ENCODE measurements at regions of chr2 and their contacts with region 1.

Region 1: GRCh38 chr2:112121682-112122254 is 16.4 kb upstream of the FBLN7 start:
- DNase-seq: peak in 7 of 9 experiments; percentile 21 to 70 (median 53)
- ATAC-seq: peak; percentile 42
- H3K4me3 ChIP-seq: no peak overlapping the region
- H3K4me3 Mint-ChIP-seq: no peak overlapping the region
- H3K27ac ChIP-seq: no peak overlapping the region
- H3K27ac Mint-ChIP-seq: no peak overlapping the region
- H3K4me1 ChIP-seq: no peaks in the 10 kb centered on the region
- H3K4me1 Mint-ChIP-seq: no peaks in the 10 kb centered on the region
- H3K27me3 ChIP-seq: no peaks in the 10 kb centered on the region
- H3K27me3 Mint-ChIP-seq: no peaks in the 10 kb centered on the region
- CTCF ChIP-seq: peak; percentile 85

Region 2: GRCh38 chr2:111975053-111975552 is 146.7 kb before region 1 on chr2:
- CTCF ChIA-PET with region 1: no interaction called
- POLR2A ChIA-PET with region 1: no interaction called
- intact Hi-C with region 1: no loop called
- DNase-seq: no peak
- ATAC-seq: no peak
- H3K4me3 ChIP-seq: no peak overlapping the region
- H3K4me3 Mint-ChIP-seq: no peak overlapping the region
- H3K27ac ChIP-seq: no peak overlapping the region
- H3K27ac Mint-ChIP-seq: no peak overlapping the region
- H3K4me1 ChIP-seq: no peaks in the 10 kb centered on the region
- H3K4me1 Mint-ChIP-seq: no peaks in the 10 kb centered on the region
- H3K27me3 ChIP-seq: no peaks in the 10 kb centered on the region
- H3K27me3 Mint-ChIP-seq: peaks cover 13% of the 10 kb centered on the region
- CTCF ChIP-seq: no peak

Region 3: DNA sequence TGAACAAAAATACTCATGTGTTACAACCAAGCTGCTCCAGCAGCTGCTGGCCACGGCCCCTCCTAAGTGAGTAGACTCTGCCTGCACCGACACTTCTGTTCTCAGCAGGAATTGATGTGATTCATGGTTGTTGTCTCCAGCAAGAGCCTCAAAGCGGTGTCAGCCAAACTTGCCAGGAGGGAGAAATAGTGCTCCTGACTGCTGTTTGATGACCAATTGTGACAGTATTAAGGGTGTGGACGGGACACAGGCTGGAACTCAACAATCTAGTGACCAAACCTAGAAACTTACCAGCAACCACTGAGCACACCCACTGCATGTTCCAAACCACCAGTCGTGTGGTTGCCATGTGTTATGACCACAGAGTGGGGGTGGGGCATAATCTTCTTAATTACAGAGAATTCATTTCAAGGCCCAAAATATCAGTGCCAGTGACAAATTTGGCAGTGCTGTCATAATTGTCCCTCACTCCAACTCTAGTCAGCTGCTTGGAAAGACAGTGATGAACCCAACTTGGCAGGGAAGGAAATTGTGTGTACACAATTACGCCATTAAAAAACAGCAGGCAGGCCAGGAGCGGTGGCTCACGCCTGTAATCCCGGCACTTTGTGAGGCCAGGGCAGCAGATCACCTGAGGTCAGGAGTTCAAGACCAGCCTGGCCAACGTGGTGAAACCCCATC is 46.8 kb after region 1 on chr2:
- CTCF ChIA-PET with region 1: no interaction called
- POLR2A ChIA-PET with region 1: no interaction called
- intact Hi-C with region 1: loop called in 1 of 2 experiments (anchors 5 kb)
- DNase-seq: no peak
- ATAC-seq: no peak
- H3K4me3 ChIP-seq: no peak overlapping the region
- H3K4me3 Mint-ChIP-seq: no peak overlapping the region
- H3K27ac ChIP-seq: no peak overlapping the region
- H3K27ac Mint-ChIP-seq: no peak overlapping the region
- H3K4me1 ChIP-seq: no peaks in the 10 kb centered on the region
- H3K4me1 Mint-ChIP-seq: peaks cover 10% of the 10 kb centered on the region
- H3K27me3 ChIP-seq: no peaks in the 10 kb centered on the region
- H3K27me3 Mint-ChIP-seq: no peaks in the 10 kb centered on the region
- CTCF ChIP-seq: no peak

Region 4: DNA sequence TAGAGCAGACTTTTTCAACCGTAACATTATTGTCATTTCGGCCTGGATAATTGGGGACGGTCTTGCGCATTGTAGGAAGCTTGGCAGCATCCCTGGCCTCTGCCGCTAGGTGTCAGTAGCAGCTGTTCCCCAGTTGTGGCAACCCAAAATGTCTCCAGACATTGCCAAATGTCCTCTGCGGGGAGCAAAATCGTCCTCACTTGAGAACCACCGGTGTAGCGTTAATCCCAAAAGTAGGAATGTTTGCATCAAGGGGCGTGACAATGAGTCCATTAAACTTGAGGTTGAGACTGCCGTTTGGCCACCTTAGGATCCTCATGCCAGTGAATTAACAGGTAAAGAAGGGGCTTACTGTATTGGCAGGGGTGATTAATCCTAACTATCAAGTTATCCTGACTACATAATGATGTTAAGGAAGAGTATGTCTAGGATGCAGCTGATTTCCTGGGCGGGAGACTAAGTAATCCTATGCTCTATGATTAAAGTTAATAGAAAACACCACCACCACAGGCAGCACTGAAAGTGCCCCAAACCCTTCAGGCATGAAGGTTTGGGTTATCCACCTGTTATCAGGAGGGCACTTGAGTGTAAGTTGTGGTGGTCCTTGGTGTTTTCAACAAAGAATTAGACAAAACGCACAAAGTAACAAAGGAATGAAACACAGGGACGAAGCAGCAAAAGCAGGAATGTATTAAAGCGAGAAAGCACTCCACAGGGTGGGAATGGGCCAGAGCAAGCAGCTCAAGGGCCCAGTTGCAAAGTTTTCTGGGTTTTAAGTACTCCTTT is 137.9 kb after region 1 on chr2:
- CTCF ChIA-PET with region 1: interaction called, 28 read pairs
- POLR2A ChIA-PET with region 1: no interaction called
- intact Hi-C with region 1: loop called (anchors 1 kb)
- DNase-seq: peak; percentile 72 to 90 (median 87)
- ATAC-seq: peak; percentile 54
- H3K4me3 ChIP-seq: peak overlapping the region in 1 of 2 experiments; percentile 18
- H3K4me3 Mint-ChIP-seq: peak overlapping the region; percentile 76
- H3K27ac ChIP-seq: no peak overlapping the region
- H3K27ac Mint-ChIP-seq: peak overlapping the region; percentile 75
- H3K4me1 ChIP-seq: peaks cover 6% of the 10 kb centered on the region
- H3K4me1 Mint-ChIP-seq: peaks cover 9% of the 10 kb centered on the region
- H3K27me3 ChIP-seq: no peaks in the 10 kb centered on the region
- H3K27me3 Mint-ChIP-seq: peaks cover 3% of the 10 kb centered on the region
- CTCF ChIP-seq: peak; percentile 96

Region 5: GRCh38 chr2:112317303-112318158 is 195.8 kb after region 1 on chr2:
- CTCF ChIA-PET with region 1: interaction called, 3 read pairs
- POLR2A ChIA-PET with region 1: no interaction called
- intact Hi-C with region 1: loop called (anchors 5 to 10 kb)
- DNase-seq: no peak
- ATAC-seq: no peak
- H3K4me3 ChIP-seq: no peak overlapping the region
- H3K4me3 Mint-ChIP-seq: no peak overlapping the region
- H3K27ac ChIP-seq: no peak overlapping the region
- H3K27ac Mint-ChIP-seq: no peak overlapping the region
- H3K4me1 ChIP-seq: no peaks in the 10 kb centered on the region
- H3K4me1 Mint-ChIP-seq: no peaks in the 10 kb centered on the region
- H3K27me3 ChIP-seq: no peaks in the 10 kb centered on the region
- H3K27me3 Mint-ChIP-seq: no peaks in the 10 kb centered on the region
- CTCF ChIP-seq: no peak

Region 6: DNA sequence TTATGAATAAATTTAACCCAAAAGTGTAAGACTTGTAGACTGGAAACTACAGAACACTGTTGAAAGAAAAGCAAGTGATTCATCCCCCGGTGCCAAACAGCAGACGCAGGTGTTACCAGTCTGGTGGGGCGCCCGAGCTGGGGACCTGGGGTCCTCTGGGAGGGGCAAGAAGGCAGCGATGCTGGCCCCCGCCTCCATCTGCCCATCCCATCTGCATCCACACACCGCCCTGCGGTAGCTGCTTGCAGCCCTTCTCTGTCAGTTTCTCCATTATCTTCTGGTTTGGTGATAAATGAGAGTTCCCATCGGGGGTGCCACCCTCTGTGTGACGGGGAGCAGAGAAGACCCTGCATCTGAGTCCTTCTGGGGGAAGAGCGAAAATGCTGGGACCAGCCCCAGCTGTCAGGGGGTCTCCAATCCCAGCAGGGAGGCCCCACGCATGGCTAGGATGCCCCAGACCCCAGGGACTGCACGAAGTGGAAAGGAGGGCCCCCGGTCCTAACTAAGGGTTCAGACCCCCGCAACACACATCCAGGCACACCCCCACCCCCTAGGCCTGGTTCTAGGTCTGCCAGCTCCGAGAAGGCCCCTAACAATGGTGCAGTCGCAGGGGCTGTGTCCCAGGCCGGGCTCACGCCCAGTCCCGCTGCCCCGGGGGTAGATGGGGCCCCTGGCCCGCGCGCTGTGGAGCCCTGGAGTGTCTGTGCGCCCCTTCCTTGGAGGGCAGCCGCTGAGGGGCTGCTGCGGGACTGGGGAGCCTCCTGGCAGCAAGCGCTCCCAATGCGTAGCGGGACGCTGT is 312.4 kb after region 1 on chr2:
- CTCF ChIA-PET with region 1: interaction called, 3 read pairs
- POLR2A ChIA-PET with region 1: no interaction called
- intact Hi-C with region 1: loop called in 1 of 2 experiments (anchors 1 kb)
- DNase-seq: peak in 2 of 9 experiments; percentile 15 to 19
- ATAC-seq: no peak
- H3K4me3 ChIP-seq: no peak overlapping the region
- H3K4me3 Mint-ChIP-seq: no peak overlapping the region
- H3K27ac ChIP-seq: no peak overlapping the region
- H3K27ac Mint-ChIP-seq: no peak overlapping the region
- H3K4me1 ChIP-seq: peaks cover 9% of the 10 kb centered on the region
- H3K4me1 Mint-ChIP-seq: peaks cover 18% of the 10 kb centered on the region
- H3K27me3 ChIP-seq: no peaks in the 10 kb centered on the region
- H3K27me3 Mint-ChIP-seq: peaks cover 14% of the 10 kb centered on the region
- CTCF ChIP-seq: no peak

Region 7: GRCh38 chr2:112579241-112579640 is 457.5 kb after region 1 on chr2:
- CTCF ChIA-PET with region 1: no interaction called
- POLR2A ChIA-PET with region 1: no interaction called
- intact Hi-C with region 1: loop called in 1 of 2 experiments (anchors 5 kb)
- DNase-seq: no peak
- ATAC-seq: no peak
- H3K4me3 ChIP-seq: no peak overlapping the region
- H3K4me3 Mint-ChIP-seq: no peak overlapping the region
- H3K27ac ChIP-seq: no peak overlapping the region
- H3K27ac Mint-ChIP-seq: no peak overlapping the region
- H3K4me1 ChIP-seq: peaks cover 10% of the 10 kb centered on the region
- H3K4me1 Mint-ChIP-seq: peaks cover 16% of the 10 kb centered on the region
- H3K27me3 ChIP-seq: no peaks in the 10 kb centered on the region
- H3K27me3 Mint-ChIP-seq: no peaks in the 10 kb centered on the region
- CTCF ChIP-seq: no peak

Measured in CD8-positive, alpha-beta T cell (primary cell).